ENCODE measurements at regions of chr15 and their contacts with region 1.

Region 1: DNA sequence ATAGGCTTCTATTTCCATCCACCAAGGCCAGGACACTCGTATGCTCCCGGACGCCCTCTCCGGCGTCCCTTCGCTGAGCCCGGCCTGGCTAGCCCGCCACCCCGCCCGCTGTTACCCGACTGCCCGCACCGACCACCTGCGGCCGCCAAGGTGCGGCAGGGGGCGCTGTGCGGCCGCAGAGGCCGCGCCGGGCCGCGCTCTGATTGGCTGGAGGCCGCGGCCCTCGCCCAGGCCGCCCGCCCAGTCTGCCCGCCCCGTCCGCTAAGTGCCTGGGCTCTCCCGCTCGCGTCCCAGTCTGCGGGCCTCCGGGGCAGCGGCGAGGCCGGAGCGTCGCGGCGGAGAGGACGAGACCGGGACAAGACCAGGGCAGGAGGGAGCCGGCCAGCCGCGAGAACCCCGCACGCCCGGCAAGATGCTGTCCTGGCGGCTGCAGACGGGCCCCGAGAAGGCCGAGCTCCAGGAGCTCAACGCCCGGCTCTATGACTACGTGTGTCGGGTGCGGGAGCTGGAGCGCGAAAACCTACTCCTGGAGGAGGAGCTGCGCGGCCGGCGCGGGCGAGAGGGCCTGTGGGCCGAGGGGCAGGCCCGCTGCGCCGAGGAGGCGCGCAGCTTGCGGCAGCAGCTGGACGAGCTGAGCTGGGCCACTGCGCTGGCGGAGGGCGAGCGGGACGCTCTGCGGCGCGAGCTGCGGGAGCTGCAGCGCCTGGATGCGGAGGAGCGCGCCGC is at the start of gene SYNM:
- H3K4me3 Mint-ChIP-seq: peak within 1 kb of the TSS; percentile 75
- H3K27ac Mint-ChIP-seq: no peak within 1 kb of the TSS
- H3K4me1 Mint-ChIP-seq: peaks cover 10% of the 10 kb centered on the region
- H3K27me3 Mint-ChIP-seq: peaks cover 69% of the 10 kb centered on the region

Region 2: GRCh38 chr15:98996169-98996568 is 108.8 kb before region 1 on chr15:
- intact Hi-C with region 1: no loop called
- H3K4me3 Mint-ChIP-seq: no peak overlapping the region
- H3K27ac Mint-ChIP-seq: no peak overlapping the region
- H3K4me1 Mint-ChIP-seq: no peaks in the 10 kb centered on the region
- H3K27me3 Mint-ChIP-seq: peaks cover 4% of the 10 kb centered on the region

Region 3: GRCh38 chr15:99059010-99059981 is 45.7 kb before region 1 on chr15:
- intact Hi-C with region 1: no loop called
- H3K4me3 Mint-ChIP-seq: peak overlapping the region; percentile 51
- H3K27ac Mint-ChIP-seq: no peak overlapping the region
- H3K4me1 Mint-ChIP-seq: peaks cover 10% of the 10 kb centered on the region
- H3K27me3 Mint-ChIP-seq: peaks cover 60% of the 10 kb centered on the region

Region 4: GRCh38 chr15:99213187-99213811 is 108.3 kb after region 1 on chr15:
- intact Hi-C with region 1: loop called (anchors 1 kb)
- H3K4me3 Mint-ChIP-seq: no peak overlapping the region
- H3K27ac Mint-ChIP-seq: no peak overlapping the region
- H3K4me1 Mint-ChIP-seq: no peaks in the 10 kb centered on the region
- H3K27me3 Mint-ChIP-seq: no peaks in the 10 kb centered on the region

Region 5: DNA sequence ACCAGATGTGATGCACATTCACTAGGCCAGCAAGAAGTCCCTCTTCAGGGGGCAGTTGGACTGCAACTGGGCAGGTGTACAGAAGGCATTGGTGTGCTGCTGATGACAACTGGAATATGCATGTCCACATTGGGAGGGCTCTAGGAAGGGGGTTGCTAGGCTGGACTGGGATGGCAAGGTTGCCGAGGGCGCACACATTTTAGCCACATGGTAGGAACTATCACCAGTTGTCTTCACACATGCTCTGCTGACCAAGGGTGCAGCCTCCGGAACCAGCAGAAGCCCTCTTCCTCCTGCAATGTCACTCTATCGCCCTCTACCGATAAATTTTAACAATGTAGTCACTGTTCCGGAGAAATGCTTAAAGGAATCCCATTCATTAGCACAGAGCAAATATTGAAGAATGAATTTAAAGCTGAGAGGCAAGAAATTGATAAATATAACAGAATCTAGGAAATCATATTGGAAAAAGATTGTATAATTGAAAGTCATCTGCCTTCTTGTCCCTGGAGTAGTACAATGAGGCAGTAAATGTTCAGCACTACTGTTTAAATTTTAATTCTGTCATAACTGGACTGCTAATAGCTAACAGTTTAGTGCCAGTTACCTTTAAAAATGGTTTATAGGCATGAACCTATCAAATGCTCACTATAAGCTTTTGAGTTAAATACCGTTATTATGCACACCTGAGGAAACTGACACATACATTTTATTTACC is 650.9 kb after region 1 on chr15:
- intact Hi-C with region 1: loop called (anchors 10 kb)
- H3K4me3 Mint-ChIP-seq: no peak overlapping the region
- H3K27ac Mint-ChIP-seq: no peak overlapping the region
- H3K4me1 Mint-ChIP-seq: no peaks in the 10 kb centered on the region
- H3K27me3 Mint-ChIP-seq: no peaks in the 10 kb centered on the region